Right lobe of liver (tissue), 6 donors: ENCODE measurements at regions of chr1 and their contacts with region 1.

Region 1: DNA sequence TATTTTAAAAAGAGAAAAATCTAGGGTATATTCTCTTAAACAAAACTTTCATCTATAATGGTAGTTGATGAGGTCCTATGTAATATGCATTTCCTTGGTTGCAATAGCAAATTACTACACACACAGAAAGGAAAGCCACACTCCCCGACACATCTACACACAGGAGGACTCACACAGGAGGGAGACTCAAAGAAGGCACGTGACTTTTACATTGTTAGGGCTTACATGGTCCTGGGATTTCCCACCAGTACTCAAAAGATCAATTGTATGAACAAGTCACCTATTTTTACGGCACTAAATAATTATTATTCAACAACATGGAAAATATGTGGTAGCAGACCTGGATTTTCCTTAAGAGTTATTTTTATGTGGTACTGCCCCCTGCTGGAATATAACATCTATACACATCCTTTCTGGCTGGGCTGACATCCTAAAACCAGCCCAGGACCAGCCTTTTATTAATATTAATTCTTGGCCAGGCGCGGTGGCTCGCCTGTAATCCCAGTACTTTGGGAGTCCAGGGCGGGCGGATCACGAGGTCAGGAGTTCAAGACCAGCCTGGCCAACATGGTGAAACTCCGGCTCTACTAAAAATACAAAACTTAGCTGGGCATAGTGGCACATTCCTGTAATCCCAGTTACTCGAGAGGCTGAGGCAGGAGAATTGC is 33.9 kb upstream of the LGALS8 start:
- DNase-seq: peak; percentile 53 to 71 (median 68)
- ATAC-seq: peak; percentile 80 to 90 (median 83)
- H3K4me3 ChIP-seq: peak overlapping the region; percentile 22 to 46 (median 39)
- H3K27ac ChIP-seq: peak overlapping the region in 2 of 3 donors; percentile 44 to 50
- H3K4me1 ChIP-seq: no peaks in the 10 kb centered on the region
- H3K27me3 ChIP-seq: no peaks in the 10 kb centered on the region
- CTCF ChIP-seq: peak; percentile 66 to 77 (median 72)
- POLR2A ChIP-seq: no peak

Region 2: GRCh38 chr1:236113324-236114032 is 376.4 kb before region 1 on chr1:
- intact Hi-C with region 1: loop called in 1 of 2 experiments (anchors 10 kb)
- DNase-seq: peak in 1 of 3 donors; percentile 39
- ATAC-seq: no peak
- H3K4me3 ChIP-seq: no peak overlapping the region
- H3K27ac ChIP-seq: no peak overlapping the region
- H3K4me1 ChIP-seq: no peaks in the 10 kb centered on the region
- H3K27me3 ChIP-seq: no peaks in the 10 kb centered on the region
- CTCF ChIP-seq: no peak
- POLR2A ChIP-seq: no peak